Kidney (tissue), 22 donors: ENCODE measurements at regions of chr20 and their contacts with region 1.

Region 1: GRCh38 chr20:38926142-38926933 is at the start of gene FAM83D:
- DNase-seq: peak; percentile 98 to 99 (median 98)
- H3K4me3 ChIP-seq: peak within 1 kb of the TSS; percentile 51 to 59 (median 55)
- H3K27ac ChIP-seq: no peak within 1 kb of the TSS
- H3K4me1 ChIP-seq: peaks cover 0 to 11% (median 0%) of the 10 kb centered on the region in 3 donors
- H3K27me3 ChIP-seq: no peaks in the 10 kb centered on the region
- CTCF ChIP-seq: no peak
- total RNA-seq, gene FAM83D: 0.79 TPM

Region 2: GRCh38 chr20:39049684-39050554 is 123.6 kb after region 1 on chr20:
- intact Hi-C with region 1: loop called (anchors 10 kb)
- DNase-seq: peak; percentile 78 to 91 (median 86)
- H3K4me3 ChIP-seq: peak overlapping the region; percentile 56 to 93 (median 90)
- H3K27ac ChIP-seq: peak overlapping the region in 1 of 2 donors; percentile 46
- H3K4me1 ChIP-seq: peaks cover 0 to 7% (median 3%) of the 10 kb centered on the region in 3 donors
- H3K27me3 ChIP-seq: no peaks in the 10 kb centered on the region
- CTCF ChIP-seq: peak; percentile 97